ENCODE measurements at regions of chr20 and their contacts with region 1.

Region 1: DNA sequence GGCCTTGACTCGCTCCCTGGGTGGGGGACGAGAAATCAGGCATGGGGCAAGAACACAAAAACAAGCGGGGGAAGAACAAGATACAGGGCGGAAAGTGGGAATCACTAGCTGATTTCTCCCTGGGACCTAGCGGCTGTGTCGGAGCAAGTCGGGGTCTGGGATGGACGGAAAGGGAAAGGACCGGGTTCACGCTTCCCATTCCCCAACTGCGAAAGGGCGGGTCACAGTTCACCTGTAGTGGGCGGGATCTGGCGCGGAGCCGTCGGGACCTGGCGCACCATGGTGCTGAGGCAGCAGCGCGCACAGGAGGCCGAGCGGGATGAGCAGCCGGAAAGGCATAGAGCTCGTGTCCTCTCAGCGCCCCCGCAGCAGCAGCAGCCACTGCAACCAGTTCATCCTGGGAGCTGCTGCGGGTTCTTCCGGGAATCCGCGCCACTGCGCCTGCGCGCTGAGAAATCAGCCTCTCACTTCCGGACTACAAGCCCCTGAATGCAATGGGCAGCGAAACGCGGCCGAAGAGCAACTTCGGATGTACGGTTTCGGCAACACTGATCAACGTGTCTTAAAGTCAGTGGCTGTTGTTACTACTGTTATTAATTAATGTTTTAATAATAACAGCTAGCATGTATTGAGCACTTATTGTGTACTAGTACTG is at the start of gene EDEM2:
- DNase-seq: peak; percentile 95
- H3K4me3 Mint-ChIP-seq: peak within 1 kb of the TSS; percentile 86
- H3K27ac Mint-ChIP-seq: peak within 1 kb of the TSS; percentile 90
- H3K4me1 Mint-ChIP-seq: peaks cover 36% of the 10 kb centered on the region
- H3K27me3 Mint-ChIP-seq: no peaks in the 10 kb centered on the region

Region 2: GRCh38 chr20:34654207-34654744 is 492.8 kb before region 1 on chr20:
- CTCF ChIA-PET with region 1: no interaction called
- DNase-seq: no peak
- H3K4me3 Mint-ChIP-seq: no peak overlapping the region
- H3K27ac Mint-ChIP-seq: no peak overlapping the region
- H3K4me1 Mint-ChIP-seq: no peaks in the 10 kb centered on the region
- H3K27me3 Mint-ChIP-seq: no peaks in the 10 kb centered on the region

Region 3: GRCh38 chr20:35269055-35269781 is 122.2 kb after region 1 on chr20:
- CTCF ChIA-PET with region 1: interaction called, 57 read pairs
- DNase-seq: peak; percentile 70
- H3K4me3 Mint-ChIP-seq: no peak overlapping the region
- H3K27ac Mint-ChIP-seq: no peak overlapping the region
- H3K4me1 Mint-ChIP-seq: no peaks in the 10 kb centered on the region
- H3K27me3 Mint-ChIP-seq: no peaks in the 10 kb centered on the region

Measured in activated naive CD4-positive, alpha-beta T cell treated with anti-CD3 and anti-CD28 coated beads, Interleukin-2, amount 10 ng/mL, durations not matched to agents 7 days and 5 days (primary cell).